Endothelial cell of umbilical vein (primary cell): ENCODE measurements at regions of chr14 and their contacts with region 1.

Region 1: GRCh38 chr14:22314181-22314820 is 274.7 kb downstream of the DAD1 start:
- DNase-seq: peak; percentile 54
- H3K4me3 ChIP-seq: no peak overlapping the region
- H3K27ac ChIP-seq: no peak overlapping the region
- H3K4me1 ChIP-seq: no peaks in the 10 kb centered on the region
- H3K27me3 ChIP-seq: peaks cover 7 to 10% of the 10 kb centered on the region in 2 experiments
- CTCF ChIP-seq: peak; percentile 64 to 72
- POLR2A ChIP-seq: no peak

Region 2: GRCh38 chr14:22221508-22221907 is 92.8 kb before region 1 on chr14:
- CTCF ChIA-PET with region 1: interaction called, 6 read pairs
- POLR2A ChIA-PET with region 1: no interaction called
- dilution Hi-C with region 1: no loop called
- intact Hi-C with region 1: loop called (anchors 10 kb)
- DNase-seq: peak; percentile 16
- H3K4me3 ChIP-seq: no peak overlapping the region
- H3K27ac ChIP-seq: no peak overlapping the region
- H3K4me1 ChIP-seq: peaks cover 10% of the 10 kb centered on the region
- H3K27me3 ChIP-seq: peaks cover 7 to 20% of the 10 kb centered on the region in 2 experiments
- CTCF ChIP-seq: peak; percentile 14 to 31
- POLR2A ChIP-seq: no peak

Region 3: GRCh38 chr14:22412926-22413411 is 98.7 kb after region 1 on chr14:
- CTCF ChIA-PET with region 1: no interaction called
- POLR2A ChIA-PET with region 1: no interaction called
- dilution Hi-C with region 1: no loop called
- intact Hi-C with region 1: no loop called
- DNase-seq: no peak
- H3K4me3 ChIP-seq: no peak overlapping the region
- H3K27ac ChIP-seq: no peak overlapping the region
- H3K4me1 ChIP-seq: no peaks in the 10 kb centered on the region
- H3K27me3 ChIP-seq: peaks cover 28 to 29% of the 10 kb centered on the region in 2 experiments
- CTCF ChIP-seq: no peak
- POLR2A ChIP-seq: no peak